PC-9 (cell line): ENCODE measurements at regions of chr2 and their contacts with region 1.

Region 1: DNA sequence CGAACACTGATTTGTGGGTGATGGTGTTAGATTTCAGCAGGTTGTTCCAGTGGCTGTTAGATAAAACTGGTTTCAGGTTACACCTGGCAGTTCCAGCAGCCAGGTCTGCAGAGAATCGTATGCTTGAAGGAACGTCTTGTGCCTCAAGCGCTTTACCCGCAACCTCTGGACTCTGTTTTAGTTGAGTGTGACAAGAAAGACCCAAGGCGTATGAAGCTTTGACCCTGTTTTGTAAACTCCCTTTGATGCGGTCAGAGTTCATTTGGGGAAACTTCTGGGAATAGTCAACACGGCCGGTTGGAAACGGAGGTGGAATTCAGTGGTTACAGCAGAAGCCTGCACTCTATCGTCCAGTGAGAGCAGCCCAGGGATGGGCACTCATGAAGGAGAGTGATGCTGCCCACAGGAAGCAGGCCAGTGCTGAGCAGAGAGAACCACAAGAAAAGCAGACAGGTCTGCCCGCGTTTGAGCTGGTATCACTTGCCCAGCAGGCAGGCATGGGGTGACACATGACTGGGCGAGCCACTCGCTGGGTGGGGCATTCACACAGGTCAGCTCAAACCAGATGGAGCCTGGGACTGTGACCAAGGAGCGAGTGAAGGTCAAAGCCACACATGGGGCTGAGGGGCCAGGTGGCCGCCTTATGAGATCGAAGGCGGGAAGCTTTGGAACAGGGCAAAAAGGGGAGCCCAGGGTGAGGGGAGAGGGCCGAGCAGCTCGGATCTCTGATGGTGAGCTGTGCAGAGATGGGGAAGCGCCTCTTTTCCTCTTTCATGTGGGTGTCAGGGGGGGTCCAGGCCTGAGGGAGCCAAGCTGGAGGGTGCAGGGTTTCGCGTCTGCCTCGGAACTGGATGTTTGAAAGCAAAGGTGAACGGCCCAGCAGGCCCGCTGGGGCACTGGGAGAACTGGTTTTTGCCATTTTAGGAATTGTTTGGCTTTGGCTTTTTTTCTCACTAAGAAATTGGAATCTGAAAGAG is 99.7 kb upstream of the MBOAT2 start:
- DNase-seq: peak; percentile 78 to 98
- H3K4me3 ChIP-seq: peak overlapping the region; percentile 48
- H3K27ac ChIP-seq: peak overlapping the region; percentile 98
- H3K4me1 ChIP-seq: peaks cover 69% of the 10 kb centered on the region
- H3K27me3 ChIP-seq: no peaks in the 10 kb centered on the region
- CTCF ChIP-seq: no peak; the same call in 1 of the 2 replicates

Region 2: GRCh38 chr2:8872821-8873432 is 230.2 kb before region 1 on chr2:
- CTCF ChIA-PET with region 1: no interaction called
- POLR2A ChIA-PET with region 1: no interaction called
- intact Hi-C with region 1: loop called (anchors 2 kb)
- DNase-seq: peak; percentile 2 to 56
- H3K4me3 ChIP-seq: no peak overlapping the region
- H3K27ac ChIP-seq: no peak overlapping the region
- H3K4me1 ChIP-seq: no peaks in the 10 kb centered on the region
- H3K27me3 ChIP-seq: no peaks in the 10 kb centered on the region
- CTCF ChIP-seq: peak; percentile 82

Region 3: GRCh38 chr2:8885449-8886201 is 217.5 kb before region 1 on chr2:
- CTCF ChIA-PET with region 1: no interaction called
- POLR2A ChIA-PET with region 1: no interaction called
- intact Hi-C with region 1: no loop called
- DNase-seq: no peak
- H3K4me3 ChIP-seq: no peak overlapping the region
- H3K27ac ChIP-seq: no peak overlapping the region
- H3K4me1 ChIP-seq: no peaks in the 10 kb centered on the region
- H3K27me3 ChIP-seq: no peaks in the 10 kb centered on the region
- CTCF ChIP-seq: no peak

Region 4: GRCh38 chr2:9003616-9004337 is 99.4 kb before region 1 on chr2 and contains the start of gene MBOAT2:
- CTCF ChIA-PET with region 1: no interaction called
- POLR2A ChIA-PET with region 1: interaction called, 9 read pairs
- intact Hi-C with region 1: loop called (anchors 1 kb)
- DNase-seq: peak; percentile 72 to 89
- H3K4me3 ChIP-seq: peak within 1 kb of the TSS; percentile 83
- H3K27ac ChIP-seq: peak within 1 kb of the TSS; percentile 97
- H3K4me1 ChIP-seq: peaks cover 47% of the 10 kb centered on the region
- H3K27me3 ChIP-seq: no peaks in the 10 kb centered on the region
- CTCF ChIP-seq: no peak
- total RNA-seq, gene MBOAT2: 45.3 and 57.7 TPM in 2 replicates

Region 5: GRCh38 chr2:9057939-9058761 is 45.0 kb before region 1 on chr2:
- CTCF ChIA-PET with region 1: no interaction called
- POLR2A ChIA-PET with region 1: interaction called, 3 read pairs
- intact Hi-C with region 1: loop called (anchors 5 kb)
- DNase-seq: peak in 1 of 2 experiments; percentile 45
- H3K4me3 ChIP-seq: no peak overlapping the region
- H3K27ac ChIP-seq: no peak overlapping the region; the same call in 1 of the 2 replicates
- H3K4me1 ChIP-seq: peaks cover 7% of the 10 kb centered on the region
- H3K27me3 ChIP-seq: no peaks in the 10 kb centered on the region
- CTCF ChIP-seq: no peak

Region 6: DNA sequence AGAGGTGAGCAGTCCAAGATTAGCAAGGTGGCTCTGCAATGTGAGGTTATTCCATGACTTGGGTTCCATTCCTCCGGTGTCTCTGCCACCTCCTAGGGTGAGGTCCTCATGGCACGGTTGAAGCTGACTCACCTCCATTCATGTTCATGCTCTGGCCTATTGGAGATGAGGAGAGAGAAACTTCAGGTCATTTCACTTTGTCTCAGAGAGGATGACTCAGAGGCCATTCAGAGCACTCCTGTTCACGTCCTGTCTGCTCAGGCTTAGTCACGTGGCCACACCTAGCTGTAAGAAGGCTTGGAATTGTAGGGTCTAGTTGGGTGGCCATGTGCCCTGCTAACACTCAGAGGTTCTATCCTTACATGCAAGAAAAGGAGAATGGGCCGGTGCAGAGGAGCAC is 32.1 kb before region 1 on chr2:
- CTCF ChIA-PET with region 1: no interaction called
- POLR2A ChIA-PET with region 1: no interaction called
- intact Hi-C with region 1: loop called (anchors 1 kb)
- DNase-seq: peak; percentile 68 to 98
- H3K4me3 ChIP-seq: 0 out of 2 replicates have a peak overlapping the region, but pooled peaks have one; percentile 17
- H3K27ac ChIP-seq: peak overlapping the region; percentile 88
- H3K4me1 ChIP-seq: peaks cover 41% of the 10 kb centered on the region
- H3K27me3 ChIP-seq: no peaks in the 10 kb centered on the region
- CTCF ChIP-seq: no peak